SK-N-SH (cell line): ENCODE measurements at regions of chr10 and their contacts with region 1.

Region 1: DNA sequence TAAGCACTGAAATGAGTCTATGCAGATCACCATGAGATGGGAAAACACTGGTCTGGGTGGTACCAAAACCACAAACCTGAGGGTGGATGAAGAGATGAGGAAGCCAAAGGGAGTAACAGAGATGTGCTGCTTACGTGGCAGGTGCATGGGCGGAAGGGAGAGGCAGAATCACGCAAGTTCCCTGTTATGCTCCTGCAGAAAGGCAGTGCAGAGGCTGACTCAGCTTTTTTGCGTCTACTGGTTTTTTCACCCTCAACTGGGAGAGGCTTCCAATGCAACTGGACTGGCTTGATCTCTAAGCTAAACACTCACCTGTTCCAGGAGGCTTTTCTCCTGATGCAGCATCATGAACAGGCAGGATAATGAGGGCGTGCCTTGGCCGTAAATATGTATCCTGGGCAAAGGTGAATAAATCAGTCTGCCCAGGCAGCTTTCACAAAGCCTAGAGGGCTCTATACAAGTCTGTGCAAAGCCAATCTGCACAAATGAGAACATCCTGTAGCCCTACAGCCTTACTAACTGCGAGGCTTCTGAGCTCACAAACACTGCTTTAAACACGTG is 95.4 kb upstream of the AFAP1L2 start:
- DNase-seq: no peak
- H3K4me3 ChIP-seq: no peak overlapping the region
- H3K27ac ChIP-seq: no peak overlapping the region
- H3K4me1 ChIP-seq: peaks cover 0 to 2% of the 10 kb centered on the region in 2 experiments; a peak in 1 of 4 replicates
- H3K27me3 ChIP-seq: no peaks in the 10 kb centered on the region
- CTCF ChIP-seq: no peak
- EP300 ChIP-seq: no peak
- RAD21 ChIP-seq: no peak

Region 2: DNA sequence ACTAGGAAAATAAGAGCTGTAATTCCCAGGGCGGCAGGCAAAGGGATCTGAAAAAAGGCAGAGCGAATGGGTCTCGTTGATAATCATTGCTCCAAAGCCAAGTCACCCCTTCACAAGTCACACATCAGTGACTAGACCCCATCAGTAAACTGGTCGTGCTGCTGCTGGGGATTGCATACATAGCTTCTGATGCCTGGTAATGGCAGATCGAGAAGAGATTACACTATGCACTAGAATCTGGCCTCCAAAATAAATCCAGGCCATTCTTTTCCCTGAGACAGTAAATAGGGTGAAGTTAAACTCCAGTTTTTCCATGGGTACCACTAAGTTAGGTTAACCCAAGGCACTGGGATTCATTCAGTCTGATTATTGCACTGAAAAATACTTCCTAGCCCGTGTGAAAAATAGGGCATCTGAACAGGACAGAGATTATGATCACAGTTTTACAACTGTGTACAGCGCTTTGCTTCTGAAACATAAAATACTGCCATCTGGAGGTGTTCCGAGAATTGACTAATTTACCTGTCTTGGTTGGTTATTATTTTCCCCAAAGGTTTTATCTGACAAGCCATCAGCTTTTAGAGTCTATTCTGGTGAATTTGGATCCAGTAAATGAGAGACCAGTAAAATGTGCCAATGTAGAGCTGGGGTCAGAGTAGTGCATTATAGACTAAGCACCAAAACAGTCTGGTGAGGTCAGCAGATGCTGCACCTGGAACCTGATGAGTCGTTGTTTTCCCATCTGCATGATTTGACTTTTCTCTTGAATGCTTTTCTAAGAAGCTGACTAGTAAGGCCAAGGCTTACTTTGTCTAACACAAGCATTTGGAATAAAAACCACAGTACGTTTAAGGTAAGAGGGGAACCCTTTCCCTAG is 12.5 kb before region 1 on chr10:
- CTCF ChIA-PET with region 1: interaction called, 11 read pairs
- POLR2A ChIA-PET with region 1: no interaction called
- DNase-seq: peak; percentile 37
- H3K4me3 ChIP-seq: no peak overlapping the region
- H3K27ac ChIP-seq: peak overlapping the region; percentile 50 to 80; a peak in 3 of 4 replicates
- H3K4me1 ChIP-seq: peaks cover 21 to 39% of the 10 kb centered on the region in 2 experiments; a peak in 3 of 4 replicates
- H3K27me3 ChIP-seq: no peaks in the 10 kb centered on the region
- CTCF ChIP-seq: peak; percentile 34
- EP300 ChIP-seq: peak in 1 of 2 experiments; percentile 4; a peak in 2 of 4 replicates
- RAD21 ChIP-seq: peak; percentile 46